Heart right ventricle (tissue), 16 donors: ENCODE measurements at regions of chr1 and their contacts with region 1.

Region 1: DNA sequence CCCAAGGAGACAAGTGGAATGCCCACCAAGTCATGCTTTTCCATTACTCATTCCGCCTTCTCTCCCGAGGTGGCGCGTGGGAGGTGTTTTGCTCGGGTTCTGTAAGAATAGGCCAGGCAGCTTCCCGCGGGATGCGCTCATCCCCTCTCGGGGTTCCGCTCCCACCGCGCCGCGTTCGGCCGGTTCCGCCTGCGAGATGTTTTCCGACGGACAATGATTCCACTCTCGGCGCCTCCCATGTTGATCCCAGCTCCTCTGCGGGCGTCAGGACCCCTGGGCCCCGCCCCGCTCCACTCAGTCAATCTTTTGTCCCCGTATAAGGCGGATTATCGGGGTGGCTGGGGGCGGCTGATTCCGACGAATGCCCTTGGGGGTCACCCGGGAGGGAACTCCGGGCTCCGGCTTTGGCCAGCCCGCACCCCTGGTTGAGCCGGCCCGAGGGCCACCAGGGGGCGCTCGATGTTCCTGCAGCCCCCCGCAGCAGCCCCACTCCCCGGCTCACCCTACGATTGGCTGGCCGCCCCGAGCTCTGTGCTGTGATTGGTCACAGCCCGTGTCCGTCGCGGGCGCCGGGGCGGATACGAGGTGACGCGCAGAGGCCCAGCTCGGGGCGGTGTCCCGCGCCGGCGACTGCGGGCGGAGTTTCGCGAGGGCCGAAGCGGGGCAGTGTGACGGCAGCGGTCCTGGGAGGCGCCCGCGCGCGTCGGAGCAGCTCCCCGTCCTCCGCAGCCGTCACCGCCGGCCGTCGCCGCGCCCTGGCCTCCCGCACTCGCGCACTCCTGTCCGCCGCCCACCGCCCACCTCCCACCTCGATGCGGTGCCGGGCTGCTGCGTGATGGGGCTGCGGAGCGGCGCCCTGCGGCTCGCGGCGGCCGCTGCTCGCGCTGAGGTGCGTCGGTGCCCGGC is at the start of gene KIF1B:
- DNase-seq: peak; percentile 98 to 99
- ATAC-seq: peak; percentile 96 to 98 (median 97)
- H3K4me3 ChIP-seq: peak within 1 kb of the TSS; percentile 74 to 97 (median 94)
- H3K27ac ChIP-seq: peak within 1 kb of the TSS; percentile 97 to 100 (median 99)
- H3K4me1 ChIP-seq: peaks cover 5 to 42% (median 39%) of the 10 kb centered on the region in 9 donors
- H3K27me3 ChIP-seq: no peaks in the 10 kb centered on the region
- CTCF ChIP-seq: peak; percentile 96 to 100 (median 99)
- total RNA-seq, gene KIF1B: 64.9 to 107 (median 89.9) TPM

Region 2: GRCh38 chr1:10032590-10033358 is 177.4 kb before region 1 on chr1 and contains the start of gene UBE4B:
- intact Hi-C with region 1: loop called in 1 of 10 experiments (anchors 5 kb)
- DNase-seq: peak; percentile 97 to 99
- ATAC-seq: peak; percentile 99 to 100 (median 100)
- H3K4me3 ChIP-seq: peak within 1 kb of the TSS; percentile 87 to 100 (median 98)
- H3K27ac ChIP-seq: peak within 1 kb of the TSS; percentile 85 to 98 (median 95)
- H3K4me1 ChIP-seq: peaks cover 0 to 47% (median 28%) of the 10 kb centered on the region in 9 donors
- H3K27me3 ChIP-seq: no peaks in the 10 kb centered on the region
- CTCF ChIP-seq: peak; percentile 80 to 96 (median 88)
- total RNA-seq, gene UBE4B: 59.0 to 87.3 (median 69.2) TPM

Region 3: DNA sequence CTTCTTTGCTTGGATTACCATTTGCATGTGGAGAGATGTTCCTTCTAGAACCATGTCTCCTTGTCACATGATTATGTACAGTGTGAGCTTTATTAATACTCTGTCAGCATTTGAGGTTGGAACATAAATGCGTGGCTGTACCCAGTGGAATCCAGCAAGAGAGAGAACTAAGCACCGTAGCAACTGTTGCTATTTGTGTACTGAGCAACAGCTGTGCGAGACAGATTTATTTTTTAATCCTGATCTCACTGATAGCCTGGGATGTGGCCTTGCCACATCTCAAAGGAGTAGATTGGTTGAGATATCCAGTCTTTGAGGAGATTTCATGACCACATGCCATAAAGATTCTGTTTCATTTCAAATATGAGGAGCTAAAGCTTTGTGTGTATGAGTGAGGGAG is 43.6 kb after region 1 on chr1:
- intact Hi-C with region 1: loop called in 6 of 10 experiments (anchors 5 kb)
- DNase-seq: peak in 1 of 2 donors; percentile 41
- ATAC-seq: peak; percentile 73 to 96 (median 90)
- H3K4me3 ChIP-seq: no peak overlapping the region
- H3K27ac ChIP-seq: peak overlapping the region; percentile 2 to 72 (median 54)
- H3K4me1 ChIP-seq: peaks cover 0 to 67% (median 56%) of the 10 kb centered on the region in 9 donors
- H3K27me3 ChIP-seq: no peaks in the 10 kb centered on the region
- CTCF ChIP-seq: no peak

Region 4: GRCh38 chr1:10283318-10283984 is 73.3 kb after region 1 on chr1:
- intact Hi-C with region 1: loop called in 5 of 10 experiments (anchors 5 to 10 kb)
- DNase-seq: no peak
- ATAC-seq: no peak
- H3K4me3 ChIP-seq: no peak overlapping the region
- H3K27ac ChIP-seq: peak overlapping the region in 2 of 10 donors; percentile 7 to 19
- H3K4me1 ChIP-seq: peaks cover 0 to 48% (median 32%) of the 10 kb centered on the region in 9 donors
- H3K27me3 ChIP-seq: no peaks in the 10 kb centered on the region
- CTCF ChIP-seq: no peak

Region 5: GRCh38 chr1:10338047-10338446 is 127.9 kb after region 1 on chr1:
- intact Hi-C with region 1: loop called (anchors 2 to 10 kb)
- DNase-seq: peak; percentile 40 to 47
- ATAC-seq: peak in 7 of 8 donors; percentile 77 to 92 (median 86)
- H3K4me3 ChIP-seq: no peak overlapping the region
- H3K27ac ChIP-seq: peak overlapping the region in 4 of 10 donors; percentile 37 to 71 (median 55)
- H3K4me1 ChIP-seq: peaks cover 0 to 26% (median 22%) of the 10 kb centered on the region in 9 donors
- H3K27me3 ChIP-seq: no peaks in the 10 kb centered on the region
- CTCF ChIP-seq: peak; percentile 61 to 83 (median 70)